ENCODE measurements at regions of chr6 and their contacts with region 1.

Region 1: GRCh38 chr6:134247231-134247833 is 70.6 kb downstream of the SGK1 start:
- DNase-seq: peak in 8 of 9 donors; percentile 67 to 96 (median 93)
- ATAC-seq: peak; percentile 97
- H3K4me3 ChIP-seq: peak overlapping the region; percentile 21
- H3K4me3 Mint-ChIP-seq: peak overlapping the region; percentile 50 to 84 (median 75)
- H3K27ac ChIP-seq: peak overlapping the region; percentile 77
- H3K27ac Mint-ChIP-seq: peak overlapping the region; percentile 83 to 99 (median 94)
- H3K4me1 ChIP-seq: peaks cover 34 to 60% of the 10 kb centered on the region in 2 donors
- H3K4me1 Mint-ChIP-seq: peaks cover 30 to 75% (median 63%) of the 10 kb centered on the region in 7 donors
- H3K27me3 ChIP-seq: no peaks in the 10 kb centered on the region
- H3K27me3 Mint-ChIP-seq: no peaks in the 10 kb centered on the region

Region 2: GRCh38 chr6:133837801-133838349 is 409.5 kb before region 1 on chr6:
- CTCF ChIA-PET with region 1: no interaction called
- POLR2A ChIA-PET with region 1: no interaction called
- intact Hi-C with region 1: no loop called
- DNase-seq: peak; percentile 11 to 67 (median 43)
- ATAC-seq: peak; percentile 76
- H3K4me3 ChIP-seq: peak overlapping the region; percentile 21
- H3K4me3 Mint-ChIP-seq: peak overlapping the region; percentile 46 to 84 (median 70)
- H3K27ac ChIP-seq: no peak overlapping the region
- H3K27ac Mint-ChIP-seq: no peak overlapping the region
- H3K4me1 ChIP-seq: peaks cover 0 to 6% of the 10 kb centered on the region in 2 donors
- H3K4me1 Mint-ChIP-seq: peaks cover 0 to 10% (median 7%) of the 10 kb centered on the region in 7 donors
- H3K27me3 ChIP-seq: no peaks in the 10 kb centered on the region
- H3K27me3 Mint-ChIP-seq: peaks cover 10 to 48% (median 41%) of the 10 kb centered on the region in 5 donors

Region 3: DNA sequence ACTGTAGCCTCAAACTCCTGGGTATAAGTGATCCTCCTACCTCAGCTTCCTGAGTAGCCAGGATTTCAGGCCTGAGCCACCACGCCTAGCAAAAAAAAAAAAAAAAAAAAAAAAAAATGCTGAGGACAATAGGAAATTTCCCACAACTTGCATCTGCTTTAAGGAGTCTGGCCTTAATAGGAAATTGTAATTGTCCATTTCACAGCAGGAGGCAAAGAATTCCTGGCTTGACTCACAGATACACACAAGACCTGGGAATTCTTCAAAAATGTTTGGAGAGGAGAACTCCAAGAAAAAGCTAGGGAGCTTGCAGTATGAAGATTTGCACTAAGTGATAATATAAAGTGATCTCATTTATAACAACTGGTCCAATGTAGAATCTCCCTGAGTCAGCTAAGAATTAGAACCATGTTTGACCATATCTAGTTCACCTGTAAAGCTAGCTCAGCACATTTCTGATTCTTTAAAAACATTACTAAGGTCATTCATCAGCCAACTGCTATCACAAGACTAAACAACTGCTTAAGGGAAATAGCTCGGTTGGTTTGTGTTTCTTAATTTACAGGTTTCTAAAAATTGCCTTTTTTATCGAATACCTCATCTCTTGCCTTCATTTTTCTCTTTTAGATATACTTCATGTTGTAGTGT is 114.7 kb before region 1 on chr6:
- CTCF ChIA-PET with region 1: no interaction called
- POLR2A ChIA-PET with region 1: no interaction called
- intact Hi-C with region 1: no loop called
- DNase-seq: no peak
- ATAC-seq: no peak
- H3K4me3 ChIP-seq: no peak overlapping the region
- H3K4me3 Mint-ChIP-seq: no peak overlapping the region
- H3K27ac ChIP-seq: no peak overlapping the region
- H3K27ac Mint-ChIP-seq: no peak overlapping the region
- H3K4me1 ChIP-seq: no peaks in the 10 kb centered on the region
- H3K4me1 Mint-ChIP-seq: peaks cover 0 to 4% (median 0%) of the 10 kb centered on the region in 7 donors
- H3K27me3 ChIP-seq: no peaks in the 10 kb centered on the region
- H3K27me3 Mint-ChIP-seq: peaks cover 0 to 4% (median 3%) of the 10 kb centered on the region in 5 donors

Region 4: DNA sequence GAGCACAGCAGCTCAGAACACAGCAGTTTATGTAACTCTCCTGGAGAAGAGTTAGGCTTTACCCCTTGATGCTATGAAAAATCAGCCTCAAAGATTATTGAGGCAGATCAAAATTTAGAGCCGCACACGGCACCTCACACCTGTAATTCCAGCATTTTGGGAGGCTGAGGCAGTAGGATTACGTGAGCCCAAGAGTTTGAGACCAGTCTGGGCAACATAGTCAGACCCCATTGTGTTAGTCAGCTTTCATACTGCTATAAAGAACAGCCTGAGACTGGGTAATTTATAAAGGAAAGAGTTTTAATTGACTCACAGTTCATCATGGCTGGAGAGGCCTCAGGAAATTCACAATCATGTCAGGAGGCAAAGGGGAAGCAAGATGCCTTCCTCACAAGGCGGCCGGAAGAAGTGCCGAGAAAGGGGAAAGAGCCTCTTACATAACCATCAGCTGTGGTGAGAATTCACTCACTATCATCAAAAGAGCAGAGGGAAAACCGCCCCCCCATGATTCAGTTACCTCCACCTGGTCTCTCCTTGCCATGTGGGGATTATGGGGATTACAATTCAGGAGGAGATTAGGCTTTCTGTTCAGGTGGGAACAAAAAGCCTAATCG is 17.1 kb before region 1 on chr6:
- CTCF ChIA-PET with region 1: no interaction called
- POLR2A ChIA-PET with region 1: interaction called, 3 read pairs
- intact Hi-C with region 1: loop called in 1 of 2 experiments (anchors 2 kb)
- DNase-seq: no peak
- ATAC-seq: peak; percentile 71
- H3K4me3 ChIP-seq: no peak overlapping the region
- H3K4me3 Mint-ChIP-seq: peak overlapping the region in 7 of 10 donors; percentile 9 to 60 (median 41)
- H3K27ac ChIP-seq: no peak overlapping the region
- H3K27ac Mint-ChIP-seq: peak overlapping the region in 6 of 9 donors; percentile 12 to 77 (median 38)
- H3K4me1 ChIP-seq: no peaks in the 10 kb centered on the region
- H3K4me1 Mint-ChIP-seq: peaks cover 0 to 21% (median 12%) of the 10 kb centered on the region in 7 donors
- H3K27me3 ChIP-seq: no peaks in the 10 kb centered on the region
- H3K27me3 Mint-ChIP-seq: no peaks in the 10 kb centered on the region

Region 5: GRCh38 chr6:134317471-134318131 is 70.3 kb after region 1 on chr6 and contains the start of gene SGK1:
- CTCF ChIA-PET with region 1: no interaction called
- POLR2A ChIA-PET with region 1: interaction called, 4 read pairs
- intact Hi-C with region 1: loop called in 1 of 2 experiments (anchors 1 kb)
- DNase-seq: peak; percentile 6 to 40 (median 32)
- ATAC-seq: peak; percentile 77
- H3K4me3 ChIP-seq: peak within 1 kb of the TSS; percentile 68
- H3K4me3 Mint-ChIP-seq: peak within 1 kb of the TSS; percentile 85 to 99 (median 91)
- H3K27ac ChIP-seq: peak within 1 kb of the TSS; percentile 37
- H3K27ac Mint-ChIP-seq: peak within 1 kb of the TSS in 6 of 9 donors; percentile 50 to 84 (median 77)
- H3K4me1 ChIP-seq: peaks cover 0 to 6% of the 10 kb centered on the region in 2 donors
- H3K4me1 Mint-ChIP-seq: peaks cover 2 to 47% (median 29%) of the 10 kb centered on the region in 7 donors
- H3K27me3 ChIP-seq: no peaks in the 10 kb centered on the region
- H3K27me3 Mint-ChIP-seq: peaks cover 0 to 56% (median 21%) of the 10 kb centered on the region in 5 donors
- total RNA-seq, gene SGK1: 16.4 to 443 (median 32.4) TPM

Region 6: GRCh38 chr6:134373282-134373922 is 126.1 kb after region 1 on chr6:
- CTCF ChIA-PET with region 1: no interaction called
- POLR2A ChIA-PET with region 1: no interaction called
- intact Hi-C with region 1: loop called (anchors 2 to 5 kb)
- DNase-seq: no peak
- ATAC-seq: peak; percentile 71
- H3K4me3 ChIP-seq: no peak overlapping the region
- H3K4me3 Mint-ChIP-seq: peak overlapping the region in 5 of 10 donors; percentile 19 to 71 (median 38)
- H3K27ac ChIP-seq: no peak overlapping the region
- H3K27ac Mint-ChIP-seq: peak overlapping the region in 6 of 9 donors; percentile 20 to 92 (median 82)
- H3K4me1 ChIP-seq: peaks cover 0 to 14% of the 10 kb centered on the region in 2 donors
- H3K4me1 Mint-ChIP-seq: peaks cover 17 to 42% (median 37%) of the 10 kb centered on the region in 7 donors
- H3K27me3 ChIP-seq: no peaks in the 10 kb centered on the region
- H3K27me3 Mint-ChIP-seq: no peaks in the 10 kb centered on the region

Region 7: GRCh38 chr6:134517145-134517658 is 269.9 kb after region 1 on chr6:
- CTCF ChIA-PET with region 1: no interaction called
- POLR2A ChIA-PET with region 1: interaction called, 4 read pairs
- intact Hi-C with region 1: loop called (anchors 5 kb)
- DNase-seq: peak in 1 of 9 donors; percentile 20
- ATAC-seq: no peak
- H3K4me3 ChIP-seq: no peak overlapping the region
- H3K4me3 Mint-ChIP-seq: peak overlapping the region in 2 of 10 donors; percentile 1 to 9
- H3K27ac ChIP-seq: no peak overlapping the region
- H3K27ac Mint-ChIP-seq: peak overlapping the region in 7 of 9 donors; percentile 3 to 95 (median 66)
- H3K4me1 ChIP-seq: peaks cover 0 to 24% of the 10 kb centered on the region in 2 donors
- H3K4me1 Mint-ChIP-seq: peaks cover 12 to 48% (median 34%) of the 10 kb centered on the region in 7 donors
- H3K27me3 ChIP-seq: no peaks in the 10 kb centered on the region
- H3K27me3 Mint-ChIP-seq: no peaks in the 10 kb centered on the region

Region 8: GRCh38 chr6:135088818-135089809 is 841.8 kb after region 1 on chr6:
- CTCF ChIA-PET with region 1: no interaction called
- POLR2A ChIA-PET with region 1: no interaction called
- intact Hi-C with region 1: loop called in 1 of 2 experiments (anchors 5 kb)
- DNase-seq: peak in 4 of 9 donors; percentile 24 to 52 (median 36)
- ATAC-seq: peak; percentile 73
- H3K4me3 ChIP-seq: peak overlapping the region; percentile 50
- H3K4me3 Mint-ChIP-seq: peak overlapping the region; percentile 50 to 86 (median 66)
- H3K27ac ChIP-seq: peak overlapping the region; percentile 69
- H3K27ac Mint-ChIP-seq: peak overlapping the region; percentile 72 to 98 (median 95)
- H3K4me1 ChIP-seq: peaks cover 29 to 63% of the 10 kb centered on the region in 2 donors
- H3K4me1 Mint-ChIP-seq: peaks cover 43 to 98% (median 94%) of the 10 kb centered on the region in 7 donors
- H3K27me3 ChIP-seq: no peaks in the 10 kb centered on the region
- H3K27me3 Mint-ChIP-seq: no peaks in the 10 kb centered on the region